Activated B cell treated with CpG ODN at 0.5 μM for 24 hours (primary cell): ENCODE measurements at regions of chr19 and their contacts with region 1.

Region 1: GRCh38 chr19:8513687-8514504 is at the start of gene ZNF414:
- DNase-seq: peak; percentile 99
- ATAC-seq: peak; percentile 90
- H3K4me3 Mint-ChIP-seq: peak within 1 kb of the TSS; percentile 94
- H3K27ac Mint-ChIP-seq: peak within 1 kb of the TSS; percentile 98
- H3K4me1 Mint-ChIP-seq: peaks cover 27% of the 10 kb centered on the region
- H3K27me3 Mint-ChIP-seq: no peaks in the 10 kb centered on the region
- CTCF ChIP-seq: no peak
- total RNA-seq, gene ZNF414: 28.6 and 32.8 TPM in 2 replicates

Region 2: DNA sequence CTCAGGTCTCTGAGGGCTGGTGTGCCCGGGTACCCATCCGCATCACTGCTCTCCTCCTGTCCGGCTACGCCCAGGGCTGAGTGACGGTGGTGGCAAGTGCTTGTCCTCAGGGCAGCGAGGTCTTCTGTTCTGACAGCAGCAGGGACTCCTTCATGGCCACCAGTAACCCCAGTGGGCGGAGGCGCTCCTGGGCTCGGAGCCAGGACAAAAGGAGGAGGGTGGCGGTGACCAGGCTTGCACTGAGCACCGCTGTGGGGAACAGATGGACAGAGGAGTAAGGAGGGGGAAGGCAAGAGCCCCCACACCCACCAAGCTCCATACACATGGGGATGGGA is 211.6 kb before region 1 on chr19:
- CTCF ChIA-PET with region 1: no interaction called
- POLR2A ChIA-PET with region 1: no interaction called
- intact Hi-C with region 1: no loop called
- DNase-seq: peak; percentile 14
- ATAC-seq: no peak
- H3K4me3 Mint-ChIP-seq: no peak overlapping the region
- H3K27ac Mint-ChIP-seq: no peak overlapping the region
- H3K4me1 Mint-ChIP-seq: peaks cover 13% of the 10 kb centered on the region
- H3K27me3 Mint-ChIP-seq: no peaks in the 10 kb centered on the region
- CTCF ChIP-seq: no peak

Region 3: DNA sequence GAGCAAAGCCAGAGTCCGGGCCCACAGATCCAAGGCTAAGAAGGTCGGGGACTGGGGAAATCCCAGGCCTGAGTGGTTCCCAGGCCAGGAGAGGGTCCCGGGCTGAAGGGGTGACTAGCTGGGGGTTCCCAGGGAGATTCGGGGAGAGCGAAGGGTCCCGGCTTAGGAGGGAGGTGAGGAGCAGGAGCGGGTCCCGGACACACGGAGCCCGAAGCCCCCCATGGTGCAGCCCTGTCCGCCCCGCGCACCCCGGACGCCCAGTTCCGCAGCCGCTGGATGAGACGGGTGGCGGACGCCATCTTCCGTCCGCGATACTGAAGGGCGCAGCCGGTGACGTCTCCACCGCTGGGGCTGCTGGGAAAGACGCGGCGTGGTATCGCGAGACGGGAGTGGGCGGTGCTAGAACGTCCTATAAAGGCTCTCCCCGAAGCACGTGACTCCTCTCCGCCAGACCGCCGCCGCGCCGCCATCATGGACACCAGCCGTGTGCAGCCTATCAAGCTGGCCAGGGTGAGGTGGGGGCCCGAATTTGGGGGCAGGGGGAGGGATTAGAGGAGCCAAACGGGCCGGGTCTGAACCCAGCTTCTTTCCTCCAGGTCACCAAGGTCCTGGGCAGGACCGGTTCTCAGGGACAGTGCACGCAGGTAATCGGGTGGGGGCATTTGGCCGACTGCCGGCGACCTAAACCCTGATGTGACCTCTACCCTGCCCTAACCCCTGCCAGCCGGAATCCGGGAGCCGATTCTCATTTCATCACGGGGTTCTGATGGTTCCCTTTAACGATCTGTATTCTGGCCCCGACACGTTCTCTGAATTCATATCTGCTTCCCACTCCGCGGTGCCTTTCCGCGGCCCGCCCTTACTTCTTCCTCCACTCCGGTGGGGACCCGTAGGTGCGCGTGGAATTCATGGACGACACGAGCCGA is 192.6 kb before region 1 on chr19 and contains the starts of genes NDUFA7 and RPS28:
- CTCF ChIA-PET with region 1: no interaction called
- POLR2A ChIA-PET with region 1: interaction called, 11 read pairs
- intact Hi-C with region 1: no loop called
- DNase-seq: peak; percentile 97
- ATAC-seq: peak; percentile 95
- H3K4me3 Mint-ChIP-seq: peak within 1 kb of the TSS; percentile 98
- H3K27ac Mint-ChIP-seq: peak within 1 kb of the TSS; percentile 96
- H3K4me1 Mint-ChIP-seq: peaks cover 37% of the 10 kb centered on the region
- H3K27me3 Mint-ChIP-seq: no peaks in the 10 kb centered on the region
- CTCF ChIP-seq: no peak
- total RNA-seq, gene NDUFA7: 31.1 and 35.8 TPM in 2 replicates
- total RNA-seq, gene RPS28: 3,149 and 3,168 TPM in 2 replicates

Region 4: DNA sequence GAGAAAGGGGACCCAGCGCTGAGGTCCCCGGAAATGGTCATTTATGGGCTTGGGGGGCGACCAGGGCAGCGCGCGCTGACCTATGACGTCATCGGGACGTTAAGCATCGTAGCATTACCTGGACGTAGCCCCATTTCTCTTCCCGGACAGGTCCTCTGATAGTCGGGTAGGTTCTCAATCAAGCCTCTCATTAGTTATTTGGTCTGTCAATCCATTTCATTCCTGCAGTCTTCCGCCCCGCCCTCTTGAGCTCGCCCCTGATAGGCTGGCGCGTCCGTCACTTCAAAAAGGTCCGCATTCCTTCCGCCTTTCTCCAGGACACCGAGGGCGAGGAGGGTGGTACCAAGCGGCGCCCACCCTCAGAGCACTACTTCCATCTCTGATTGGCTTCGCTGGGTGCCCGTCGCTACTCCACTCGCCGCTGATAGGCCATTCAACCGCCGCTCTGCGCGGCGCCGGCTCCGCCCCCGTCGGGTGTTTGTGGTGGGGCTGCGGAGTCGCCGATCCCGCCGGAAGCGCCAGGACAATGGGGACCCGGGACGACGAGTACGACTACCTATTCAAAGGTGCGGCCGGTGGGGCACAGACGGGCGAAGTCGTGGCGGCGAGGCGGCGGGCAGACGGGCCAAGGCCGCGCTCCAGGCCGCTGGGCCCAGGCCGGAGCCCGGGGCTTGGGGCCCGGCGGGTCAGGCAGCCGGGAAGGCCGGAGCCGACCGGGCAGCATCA is 123.8 kb before region 1 on chr19 and contains the start of gene RAB11B:
- CTCF ChIA-PET with region 1: no interaction called
- POLR2A ChIA-PET with region 1: interaction called, 17 read pairs
- intact Hi-C with region 1: loop called (anchors 1 kb)
- DNase-seq: peak; percentile 92
- ATAC-seq: peak; percentile 88
- H3K4me3 Mint-ChIP-seq: peak within 1 kb of the TSS; percentile 95
- H3K27ac Mint-ChIP-seq: peak within 1 kb of the TSS; percentile 94
- H3K4me1 Mint-ChIP-seq: peaks cover 27% of the 10 kb centered on the region
- H3K27me3 Mint-ChIP-seq: no peaks in the 10 kb centered on the region
- CTCF ChIP-seq: no peak
- total RNA-seq, gene RAB11B: 92.1 and 100 TPM in 2 replicates

Region 5: GRCh38 chr19:8444645-8445487 is 69.0 kb before region 1 on chr19 and contains the start of gene HNRNPM:
- CTCF ChIA-PET with region 1: no interaction called
- POLR2A ChIA-PET with region 1: interaction called, 13 read pairs
- intact Hi-C with region 1: loop called (anchors 1 kb)
- DNase-seq: peak; percentile 100
- ATAC-seq: peak; percentile 94
- H3K4me3 Mint-ChIP-seq: peak within 1 kb of the TSS; percentile 98
- H3K27ac Mint-ChIP-seq: peak within 1 kb of the TSS; percentile 96
- H3K4me1 Mint-ChIP-seq: peaks cover 42% of the 10 kb centered on the region
- H3K27me3 Mint-ChIP-seq: no peaks in the 10 kb centered on the region
- CTCF ChIP-seq: no peak
- total RNA-seq, gene HNRNPM: 282 and 287 TPM in 2 replicates

Region 6: DNA sequence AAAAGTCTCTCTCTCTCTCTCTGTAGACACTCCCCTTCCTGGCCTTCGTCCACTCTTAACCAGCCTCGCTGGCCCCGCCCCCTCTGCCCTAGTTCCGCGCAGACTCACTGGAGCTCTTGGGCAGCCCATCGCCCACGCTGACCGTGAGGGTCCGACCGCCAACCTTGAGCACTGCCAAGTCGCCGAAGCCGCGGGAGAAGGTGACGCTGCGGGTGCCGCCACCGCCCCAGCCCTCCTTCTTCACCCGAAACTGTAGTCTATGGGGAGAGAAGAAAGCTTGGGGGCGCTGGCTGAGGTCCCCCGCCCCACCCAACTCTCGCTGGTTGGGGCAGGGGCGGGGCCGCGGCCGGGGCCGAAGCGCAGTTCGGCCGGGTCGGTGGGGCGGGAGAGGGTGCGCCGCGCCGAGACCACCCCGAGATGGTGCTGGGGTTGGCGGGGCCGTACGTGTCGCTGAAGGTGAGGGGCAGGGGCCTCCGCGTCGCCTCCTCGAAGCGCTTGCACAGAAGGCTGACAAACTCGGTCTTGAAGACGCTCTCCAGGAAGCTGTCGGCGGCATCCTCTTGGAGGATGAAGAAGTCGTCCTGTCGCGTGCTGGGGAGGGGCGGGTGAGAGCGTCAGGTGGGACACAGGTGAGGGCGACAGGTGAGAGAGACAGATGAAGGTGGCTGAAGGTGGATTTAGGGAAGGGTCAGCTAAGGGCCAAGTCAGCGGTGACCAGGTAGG is 12.6 kb after region 1 on chr19:
- CTCF ChIA-PET with region 1: no interaction called
- POLR2A ChIA-PET with region 1: interaction called, 30 read pairs
- intact Hi-C with region 1: no loop called
- DNase-seq: peak; percentile 43
- ATAC-seq: peak; percentile 55
- H3K4me3 Mint-ChIP-seq: peak overlapping the region; percentile 9
- H3K27ac Mint-ChIP-seq: no peak overlapping the region
- H3K4me1 Mint-ChIP-seq: no peaks in the 10 kb centered on the region
- H3K27me3 Mint-ChIP-seq: no peaks in the 10 kb centered on the region
- CTCF ChIP-seq: no peak

Region 7: DNA sequence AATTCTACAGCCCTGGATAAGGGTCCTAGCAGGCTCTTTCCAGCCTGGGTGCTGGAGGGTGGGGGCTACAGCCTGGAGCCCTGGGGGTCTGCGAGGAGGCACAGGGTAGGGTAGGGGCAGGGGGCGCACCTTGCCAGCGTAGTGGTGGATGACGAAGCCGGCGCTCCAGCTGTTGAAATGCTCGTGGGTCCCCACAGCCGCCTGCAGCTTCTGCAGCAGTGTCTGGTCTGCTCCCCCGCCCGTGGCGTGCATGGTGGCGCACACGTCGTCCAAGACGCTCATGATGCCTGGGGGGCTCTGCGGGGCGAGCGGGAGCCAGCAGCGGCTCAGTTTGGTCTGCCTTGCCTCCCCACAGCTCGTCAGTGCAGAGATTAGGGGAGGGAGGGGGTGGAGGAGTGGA is 30.3 kb after region 1 on chr19:
- CTCF ChIA-PET with region 1: no interaction called
- POLR2A ChIA-PET with region 1: no interaction called
- intact Hi-C with region 1: no loop called
- DNase-seq: no peak
- ATAC-seq: no peak
- H3K4me3 Mint-ChIP-seq: no peak overlapping the region
- H3K27ac Mint-ChIP-seq: no peak overlapping the region
- H3K4me1 Mint-ChIP-seq: no peaks in the 10 kb centered on the region
- H3K27me3 Mint-ChIP-seq: no peaks in the 10 kb centered on the region
- CTCF ChIP-seq: no peak

Region 8: DNA sequence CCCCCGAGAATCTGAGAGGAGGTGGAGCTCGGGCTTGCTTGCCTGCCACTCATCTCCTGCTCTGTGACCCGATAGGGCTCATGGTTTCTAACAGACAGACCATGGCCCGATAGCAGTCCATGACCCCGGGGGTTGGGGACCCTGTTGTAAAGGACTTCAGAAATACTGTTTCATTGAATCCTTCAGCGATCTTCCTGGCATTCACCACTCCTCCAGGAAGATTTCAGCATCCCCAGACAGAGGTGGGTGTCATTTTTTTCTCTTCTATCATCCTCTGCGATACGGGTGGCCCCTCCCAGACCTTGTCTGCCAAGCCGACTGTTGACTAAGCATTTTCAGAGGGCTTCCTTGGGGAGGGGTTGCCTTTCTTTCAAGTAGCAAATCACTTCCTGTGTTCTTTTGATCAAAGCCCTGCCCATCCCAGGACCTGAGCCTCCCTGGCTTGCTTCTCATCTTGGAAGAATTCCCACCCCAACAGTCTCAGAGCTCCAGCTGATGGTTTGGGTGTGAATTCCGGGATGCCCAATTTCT is 61.6 kb after region 1 on chr19:
- CTCF ChIA-PET with region 1: interaction called, 11 read pairs
- POLR2A ChIA-PET with region 1: interaction called, 26 read pairs
- intact Hi-C with region 1: loop called (anchors 2 kb)
- DNase-seq: no peak
- ATAC-seq: no peak
- H3K4me3 Mint-ChIP-seq: peak overlapping the region; percentile 89
- H3K27ac Mint-ChIP-seq: peak overlapping the region; percentile 69
- H3K4me1 Mint-ChIP-seq: peaks cover 72% of the 10 kb centered on the region
- H3K27me3 Mint-ChIP-seq: no peaks in the 10 kb centered on the region
- CTCF ChIP-seq: no peak

Region 9: GRCh38 chr19:9610484-9611113 is 1096.7 kb after region 1 on chr19:
- CTCF ChIA-PET with region 1: no interaction called
- POLR2A ChIA-PET with region 1: no interaction called
- intact Hi-C with region 1: no loop called
- DNase-seq: no peak
- ATAC-seq: no peak
- H3K4me3 Mint-ChIP-seq: no peak overlapping the region
- H3K27ac Mint-ChIP-seq: no peak overlapping the region
- H3K4me1 Mint-ChIP-seq: no peaks in the 10 kb centered on the region
- H3K27me3 Mint-ChIP-seq: no peaks in the 10 kb centered on the region
- CTCF ChIP-seq: no peak

Region 10: GRCh38 chr19:9818734-9819589 is 1305.1 kb after region 1 on chr19 and contains the start of gene FBXL12:
- CTCF ChIA-PET with region 1: no interaction called
- POLR2A ChIA-PET with region 1: no interaction called
- intact Hi-C with region 1: loop called (anchors 5 kb)
- DNase-seq: peak; percentile 100
- ATAC-seq: peak; percentile 87
- H3K4me3 Mint-ChIP-seq: peak within 1 kb of the TSS; percentile 94
- H3K27ac Mint-ChIP-seq: peak within 1 kb of the TSS; percentile 92
- H3K4me1 Mint-ChIP-seq: peaks cover 24% of the 10 kb centered on the region
- H3K27me3 Mint-ChIP-seq: no peaks in the 10 kb centered on the region
- CTCF ChIP-seq: no peak
- total RNA-seq, gene FBXL12: 34.6 and 41.9 TPM in 2 replicates